Gastrocnemius medialis (tissue), 4 donors: ENCODE measurements at regions of chr11 and their contacts with region 1.

Region 1: DNA sequence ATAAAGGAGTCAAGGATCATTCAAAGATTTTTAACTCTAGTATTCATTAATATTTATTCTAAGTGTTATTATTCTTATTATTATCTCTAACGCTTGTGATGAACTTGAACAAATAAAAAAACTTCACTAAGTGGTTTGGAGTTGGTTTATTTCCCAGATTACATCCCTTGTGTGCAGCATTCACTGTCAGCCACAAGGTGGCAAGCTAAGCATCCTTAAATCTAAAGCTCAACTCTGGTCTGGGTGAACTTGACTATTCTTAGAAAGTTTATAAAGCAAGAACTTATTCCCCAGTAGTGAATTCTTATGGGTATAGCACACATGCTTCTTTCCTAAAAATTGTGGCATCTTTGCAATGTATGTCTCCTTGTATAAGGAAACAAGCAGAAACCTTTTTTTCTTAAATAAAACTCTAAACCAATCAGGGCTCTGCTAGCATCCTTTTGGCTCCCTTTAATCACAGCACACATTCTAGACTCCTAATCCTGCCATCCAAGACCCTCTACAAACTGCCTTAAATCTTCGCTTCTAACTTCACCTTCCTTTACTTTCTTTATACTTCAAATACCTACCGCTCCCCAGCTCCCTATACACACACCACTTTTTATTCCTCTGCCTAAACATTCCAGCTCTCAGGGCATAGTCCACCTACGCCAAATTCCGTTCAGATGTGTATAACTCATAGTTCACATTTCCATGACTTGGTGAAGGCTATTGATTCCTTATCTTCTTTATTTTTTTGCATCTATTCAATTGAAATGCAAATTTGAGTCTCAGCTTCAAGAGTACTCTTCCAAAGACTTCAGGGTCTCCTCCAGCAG is 1068.8 kb downstream of the DLG2 start:
- DNase-seq: peak in 1 of 2 donors; percentile 14
- ATAC-seq: peak; percentile 71 to 74
- H3K4me3 ChIP-seq: no peak overlapping the region
- H3K27ac ChIP-seq: no peak overlapping the region
- H3K4me1 ChIP-seq: no peaks in the 10 kb centered on the region
- H3K27me3 ChIP-seq: no peaks in the 10 kb centered on the region
- CTCF ChIP-seq: peak; percentile 52 to 80 (median 61)
- POLR2A ChIP-seq: no peak

Region 2: DNA sequence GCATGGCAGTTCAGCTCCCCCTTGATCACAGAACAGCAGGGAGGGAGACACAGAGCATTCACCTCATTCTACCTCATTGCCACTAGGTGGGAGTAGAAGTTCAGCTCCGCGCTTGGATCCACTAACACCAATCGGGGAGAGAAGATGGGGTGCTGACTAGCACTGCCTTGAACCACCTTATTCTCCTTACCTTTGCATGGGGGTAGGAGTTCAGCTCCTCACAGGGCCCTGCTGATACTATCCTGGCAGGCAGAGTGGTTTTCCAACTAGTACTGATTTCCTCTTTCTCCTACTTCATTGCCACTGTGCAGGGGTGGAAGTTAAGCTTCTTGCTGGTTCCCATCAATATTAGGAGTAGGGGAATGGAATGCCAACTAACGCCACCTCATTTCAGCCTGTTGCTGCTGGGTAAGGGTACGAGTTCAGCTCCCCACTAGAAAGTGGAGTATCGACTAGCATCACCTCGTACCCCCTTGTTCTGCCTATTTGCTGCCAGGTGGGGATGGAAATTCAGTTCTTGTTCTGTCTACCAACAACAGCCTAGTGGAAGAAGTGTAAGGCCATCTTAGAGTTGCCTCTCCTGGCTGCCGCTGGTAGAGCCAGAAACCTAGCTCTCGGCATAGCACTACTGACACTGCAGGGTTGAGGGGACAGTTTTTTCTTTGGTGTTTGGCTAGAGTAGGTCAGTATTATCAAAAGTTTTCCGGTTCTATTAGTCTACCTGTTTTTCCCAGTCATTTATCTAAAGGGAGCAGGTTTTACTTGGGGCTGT is 721.2 kb before region 1 on chr11:
- in situ Hi-C with region 1: loop called in 1 of 4 experiments (anchors 25 kb)
- intact Hi-C with region 1: no loop called
- DNase-seq: no peak
- ATAC-seq: no peak
- H3K4me3 ChIP-seq: no peak overlapping the region
- H3K27ac ChIP-seq: no peak overlapping the region
- H3K4me1 ChIP-seq: no peaks in the 10 kb centered on the region
- H3K27me3 ChIP-seq: no peaks in the 10 kb centered on the region
- CTCF ChIP-seq: no peak
- POLR2A ChIP-seq: no peak

Region 3: DNA sequence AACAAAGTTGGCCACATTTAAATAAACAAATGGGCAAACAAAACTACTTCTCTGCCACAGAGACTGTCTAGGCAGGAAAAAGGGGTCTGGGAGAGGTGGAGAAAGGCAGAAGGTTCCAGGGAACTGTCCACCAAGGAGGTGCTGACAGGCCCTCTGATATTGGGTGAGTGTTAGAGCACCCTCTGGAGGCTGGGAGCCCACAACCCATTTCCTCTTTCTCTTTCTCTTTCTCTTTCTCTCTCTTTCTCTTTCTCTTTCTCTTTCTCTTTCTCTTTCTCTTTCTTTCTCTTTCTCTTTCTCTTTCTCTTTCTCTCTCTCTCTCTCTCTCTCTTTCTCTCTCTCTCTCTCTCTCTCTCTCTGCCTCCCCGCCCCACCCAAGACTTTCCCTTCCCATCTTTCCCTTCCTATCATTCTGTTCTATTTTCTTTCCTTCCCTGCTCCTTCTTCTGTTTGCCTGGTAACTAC is 156.1 kb after region 1 on chr11:
- in situ Hi-C with region 1: loop called in 3 of 4 experiments (anchors 5 to 25 kb)
- intact Hi-C with region 1: loop called (anchors 1 kb)
- DNase-seq: peak in 1 of 2 donors; percentile 23
- ATAC-seq: peak; percentile 45 to 66
- H3K4me3 ChIP-seq: no peak overlapping the region
- H3K27ac ChIP-seq: no peak overlapping the region
- H3K4me1 ChIP-seq: no peaks in the 10 kb centered on the region
- H3K27me3 ChIP-seq: no peaks in the 10 kb centered on the region
- CTCF ChIP-seq: peak in 2 of 5 experiments; percentile 42 to 49
- POLR2A ChIP-seq: no peak

Region 4: GRCh38 chr11:84833488-84834088 is 275.3 kb after region 1 on chr11:
- in situ Hi-C with region 1: no loop called
- intact Hi-C with region 1: no loop called
- DNase-seq: no peak
- ATAC-seq: no peak
- H3K4me3 ChIP-seq: no peak overlapping the region
- H3K27ac ChIP-seq: no peak overlapping the region
- H3K4me1 ChIP-seq: no peaks in the 10 kb centered on the region
- H3K27me3 ChIP-seq: no peaks in the 10 kb centered on the region
- CTCF ChIP-seq: no peak
- POLR2A ChIP-seq: no peak